ENCODE measurements at regions of chr5 and their contacts with region 1.

Region 1: DNA sequence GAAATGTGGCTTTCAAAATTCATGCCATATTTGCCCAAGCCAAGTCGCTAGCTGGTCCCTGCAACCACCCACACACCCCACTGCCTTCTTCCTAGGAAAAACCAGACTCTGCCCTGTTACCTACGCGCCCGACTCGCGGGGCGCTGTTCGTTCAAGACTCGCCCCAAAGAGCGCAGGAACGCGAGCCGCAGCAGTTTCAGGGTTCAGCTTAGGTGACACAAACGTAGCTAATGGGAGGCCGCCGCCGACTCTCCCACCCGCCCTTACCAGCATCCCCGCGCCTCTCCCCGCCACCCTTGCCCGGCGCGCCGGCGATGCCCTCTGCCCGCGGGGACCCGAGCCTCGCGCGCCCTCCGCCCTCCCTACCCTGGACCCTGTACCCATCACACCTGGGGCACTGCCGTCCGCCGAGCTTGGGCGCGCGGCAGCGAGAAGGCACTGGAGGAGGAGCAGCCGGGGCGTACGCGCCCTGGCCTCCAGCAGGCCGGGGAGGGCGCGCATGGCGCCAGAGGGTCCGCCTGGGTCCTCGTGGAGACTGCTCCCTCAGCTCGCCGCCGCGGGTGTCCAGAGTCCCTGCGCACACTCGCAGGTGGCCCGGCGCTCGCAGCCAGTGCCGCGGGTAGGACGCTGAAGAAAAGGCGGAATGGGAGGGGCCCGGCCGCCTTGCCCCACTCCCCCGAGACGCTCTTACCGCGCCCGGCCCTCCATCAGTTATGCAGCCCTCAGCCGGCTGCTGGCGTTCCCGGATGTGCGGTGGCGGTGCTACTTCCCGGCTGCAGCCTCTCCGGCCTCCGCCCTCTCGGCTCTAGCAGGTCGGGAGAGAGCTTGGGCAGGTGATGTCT is at the start of gene EMB:
- DNase-seq: peak; percentile 64 to 92 (median 83)
- ATAC-seq: peak; percentile 67
- H3K4me3 ChIP-seq: peak within 1 kb of the TSS; percentile 66 to 75
- H3K4me3 Mint-ChIP-seq: peak within 1 kb of the TSS; percentile 96
- H3K27ac ChIP-seq: peak within 1 kb of the TSS; percentile 86 to 87
- H3K27ac Mint-ChIP-seq: peak within 1 kb of the TSS; percentile 97
- H3K4me1 ChIP-seq: peaks cover 51% of the 10 kb centered on the region
- H3K4me1 Mint-ChIP-seq: peaks cover 69% of the 10 kb centered on the region
- H3K27me3 ChIP-seq: no peaks in the 10 kb centered on the region
- H3K27me3 Mint-ChIP-seq: no peaks in the 10 kb centered on the region
- CTCF ChIP-seq: peak; percentile 33
- total RNA-seq, gene EMB: 122 to 145 TPM

Region 2: GRCh38 chr5:50415912-50416311 is 25.0 kb before region 1 on chr5:
- CTCF ChIA-PET with region 1: no interaction called
- POLR2A ChIA-PET with region 1: interaction called, 4 read pairs
- intact Hi-C with region 1: loop called (anchors 5 kb)
- DNase-seq: peak in 4 of 9 experiments; percentile 13 to 77 (median 40)
- ATAC-seq: peak; percentile 86
- H3K4me3 ChIP-seq: no peak overlapping the region
- H3K4me3 Mint-ChIP-seq: no peak overlapping the region
- H3K27ac ChIP-seq: peak overlapping the region; percentile 48 to 50
- H3K27ac Mint-ChIP-seq: peak overlapping the region; percentile 92
- H3K4me1 ChIP-seq: peaks cover 50% of the 10 kb centered on the region
- H3K4me1 Mint-ChIP-seq: peaks cover 83% of the 10 kb centered on the region
- H3K27me3 ChIP-seq: no peaks in the 10 kb centered on the region
- H3K27me3 Mint-ChIP-seq: no peaks in the 10 kb centered on the region
- CTCF ChIP-seq: no peak

Region 3: DNA sequence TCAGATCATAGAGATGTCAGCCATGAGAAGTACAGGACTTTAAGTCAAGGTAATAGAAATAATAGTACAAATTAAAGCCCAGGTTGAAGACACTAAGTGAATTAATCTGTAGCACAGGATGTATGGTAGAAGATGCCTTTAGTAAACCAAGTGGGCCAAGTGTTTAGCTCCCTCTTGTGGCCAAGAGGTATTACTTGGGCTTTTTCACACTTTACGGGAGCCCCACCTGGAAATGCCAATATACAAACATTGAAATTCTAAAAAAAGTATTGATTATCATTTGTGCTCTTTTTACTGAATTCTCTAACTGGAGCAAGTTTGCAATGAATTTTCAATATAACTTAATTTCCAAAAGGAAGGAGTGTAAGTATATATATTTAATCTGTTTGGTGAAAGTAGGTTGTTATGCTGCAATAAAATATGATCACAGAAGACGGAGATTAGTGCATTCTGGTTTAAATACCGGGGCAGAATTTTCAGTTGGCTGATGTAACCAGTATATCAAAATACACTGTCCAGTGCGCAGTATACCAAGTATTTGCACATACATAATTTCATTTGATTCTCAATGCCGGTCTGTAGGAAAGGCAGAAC is 310.3 kb after region 1 on chr5:
- CTCF ChIA-PET with region 1: interaction called, 12 read pairs
- POLR2A ChIA-PET with region 1: interaction called, 5 read pairs
- intact Hi-C with region 1: loop called (anchors 2 kb)
- DNase-seq: peak in 7 of 9 experiments; percentile 11 to 86 (median 45)
- ATAC-seq: peak; percentile 88
- H3K4me3 ChIP-seq: no peak overlapping the region
- H3K4me3 Mint-ChIP-seq: peak overlapping the region; percentile 40
- H3K27ac ChIP-seq: peak overlapping the region in 1 of 2 experiments; percentile 57
- H3K27ac Mint-ChIP-seq: peak overlapping the region; percentile 73
- H3K4me1 ChIP-seq: peaks cover 44% of the 10 kb centered on the region
- H3K4me1 Mint-ChIP-seq: peaks cover 60% of the 10 kb centered on the region
- H3K27me3 ChIP-seq: no peaks in the 10 kb centered on the region
- H3K27me3 Mint-ChIP-seq: no peaks in the 10 kb centered on the region
- CTCF ChIP-seq: peak; percentile 90

Measured in CD8-positive, alpha-beta T cell (primary cell).